ENCODE measurements at regions of chrX and their contacts with region 1.

Region 1: GRCh38 chrX:9873952-9874351 is 87.7 kb downstream of the SHROOM2 start:
- DNase-seq: peak; percentile 62
- H3K4me3 Mint-ChIP-seq: no peak overlapping the region
- H3K27ac Mint-ChIP-seq: no peak overlapping the region
- H3K4me1 Mint-ChIP-seq: peaks cover 13% of the 10 kb centered on the region
- H3K27me3 Mint-ChIP-seq: peaks cover 3% of the 10 kb centered on the region

Region 2: GRCh38 chrX:9885150-9885549 is 11.2 kb after region 1 on chrX:
- CTCF ChIA-PET with region 1: interaction called, 4 read pairs
- intact Hi-C with region 1: loop called (anchors 1 kb)
- DNase-seq: peak; percentile 63
- H3K4me3 Mint-ChIP-seq: no peak overlapping the region
- H3K27ac Mint-ChIP-seq: no peak overlapping the region
- H3K4me1 Mint-ChIP-seq: peaks cover 2% of the 10 kb centered on the region
- H3K27me3 Mint-ChIP-seq: no peaks in the 10 kb centered on the region

Measured in activated naive CD4-positive, alpha-beta T cell treated with anti-CD3 and anti-CD28 coated beads for 36 hours (primary cell).